ENCODE measurements at regions of chr14 and their contacts with region 1.

Region 1: GRCh38 chr14:78566026-78566858 is 396.1 kb downstream of the NRXN3 start:
- DNase-seq: peak; percentile 66 to 84 (median 78)
- H3K4me3 ChIP-seq: peak overlapping the region in 4 of 7 experiments; percentile 21 to 70 (median 34)
- H3K27ac ChIP-seq: no peak overlapping the region
- H3K4me1 ChIP-seq: peaks cover 0 to 5% (median 0%) of the 10 kb centered on the region in 4 experiments
- H3K27me3 ChIP-seq: peaks cover 0 to 2% (median 0%) of the 10 kb centered on the region in 5 experiments

Region 2: DNA sequence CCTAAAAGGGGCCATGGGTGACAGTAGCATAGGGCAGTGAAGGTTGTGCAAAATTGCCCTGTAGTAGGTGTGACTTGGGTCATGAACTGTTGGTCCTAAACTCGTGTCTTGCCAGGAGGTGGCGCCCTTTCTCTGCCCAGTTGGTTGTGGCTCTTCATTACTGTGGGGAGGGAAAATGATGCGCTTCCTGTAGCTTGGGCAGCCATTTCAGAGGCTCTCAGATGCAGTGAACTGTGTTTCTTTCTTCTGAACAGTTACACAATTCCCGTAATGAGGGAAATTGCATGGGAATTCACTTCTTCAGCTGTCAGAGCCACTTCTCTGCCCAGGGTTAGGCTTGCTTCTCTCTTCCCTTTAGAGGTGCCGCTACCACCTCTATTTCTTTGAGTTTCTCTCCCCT is 544.2 kb before region 1 on chr14:
- CTCF ChIA-PET with region 1: interaction called, 11 read pairs
- POLR2A ChIA-PET with region 1: no interaction called
- DNase-seq: peak; percentile 83 to 91 (median 91)
- H3K4me3 ChIP-seq: no peak overlapping the region
- H3K27ac ChIP-seq: no peak overlapping the region
- H3K4me1 ChIP-seq: peaks cover 0 to 2% (median 0%) of the 10 kb centered on the region in 4 experiments
- H3K27me3 ChIP-seq: peaks cover 0 to 2% (median 0%) of the 10 kb centered on the region in 5 experiments

Region 3: GRCh38 chr14:78157494-78158456 is 408.5 kb before region 1 on chr14:
- CTCF ChIA-PET with region 1: interaction called, 10 read pairs
- POLR2A ChIA-PET with region 1: no interaction called
- DNase-seq: peak; percentile 34 to 67 (median 66)
- H3K4me3 ChIP-seq: no peak overlapping the region
- H3K27ac ChIP-seq: no peak overlapping the region
- H3K4me1 ChIP-seq: peaks cover 0 to 5% (median 3%) of the 10 kb centered on the region in 4 experiments
- H3K27me3 ChIP-seq: peaks cover 0 to 19% (median 0%) of the 10 kb centered on the region in 5 experiments

Region 4: GRCh38 chr14:78232231-78233000 is 333.8 kb before region 1 on chr14:
- CTCF ChIA-PET with region 1: no interaction called
- POLR2A ChIA-PET with region 1: no interaction called
- DNase-seq: no peak
- H3K4me3 ChIP-seq: no peak overlapping the region
- H3K27ac ChIP-seq: no peak overlapping the region
- H3K4me1 ChIP-seq: no peaks in the 10 kb centered on the region
- H3K27me3 ChIP-seq: peaks cover 0 to 22% (median 4%) of the 10 kb centered on the region in 5 experiments

Region 5: DNA sequence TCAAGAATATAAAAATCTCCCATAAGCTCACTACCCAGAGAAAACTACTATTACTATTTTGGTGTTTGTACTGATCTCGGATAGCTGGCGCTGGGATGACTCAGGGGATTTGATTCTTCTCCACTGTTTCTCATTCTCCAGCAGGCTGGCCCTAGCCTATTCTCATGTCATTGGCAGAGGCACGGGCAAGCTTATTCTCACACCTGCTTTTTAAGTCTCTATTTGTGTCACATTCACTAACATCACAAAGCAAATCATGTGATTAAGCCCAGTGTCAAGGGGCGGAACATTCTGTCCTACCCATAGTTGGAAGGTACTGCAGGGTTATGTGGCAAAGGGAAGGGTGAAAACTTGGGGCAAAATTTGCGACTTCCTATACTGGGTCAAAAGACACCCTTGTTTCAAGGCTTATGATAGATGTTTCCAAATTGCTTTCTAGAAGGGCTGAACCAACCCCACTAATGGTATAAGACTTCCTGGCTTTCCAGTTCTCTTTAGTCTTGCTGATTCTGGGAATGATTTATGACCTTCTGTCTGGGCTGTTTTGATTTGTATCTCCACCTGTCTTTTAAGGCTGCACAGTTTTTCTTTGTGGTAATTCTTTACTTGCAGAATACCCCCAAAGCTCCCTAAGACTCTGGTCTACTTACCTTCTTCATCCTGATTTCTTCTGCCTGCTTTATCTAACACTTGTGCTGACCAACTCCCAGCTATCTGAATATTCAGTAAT is 10.4 kb after region 1 on chr14:
- CTCF ChIA-PET with region 1: interaction called, 17 read pairs
- POLR2A ChIA-PET with region 1: no interaction called
- DNase-seq: no peak
- H3K4me3 ChIP-seq: no peak overlapping the region
- H3K27ac ChIP-seq: no peak overlapping the region
- H3K4me1 ChIP-seq: no peaks in the 10 kb centered on the region
- H3K27me3 ChIP-seq: no peaks in the 10 kb centered on the region

Region 6: GRCh38 chr14:79118291-79118690 is 552.0 kb after region 1 on chr14:
- CTCF ChIA-PET with region 1: no interaction called
- POLR2A ChIA-PET with region 1: no interaction called
- DNase-seq: no peak
- H3K4me3 ChIP-seq: no peak overlapping the region
- H3K27ac ChIP-seq: no peak overlapping the region
- H3K4me1 ChIP-seq: no peaks in the 10 kb centered on the region
- H3K27me3 ChIP-seq: no peaks in the 10 kb centered on the region

Measured in common myeloid progenitor, CD34-positive (primary cell).